Esophagus muscularis mucosa (tissue), 4 donors: ENCODE measurements at regions of chr7 and their contacts with region 1.

Region 1: DNA sequence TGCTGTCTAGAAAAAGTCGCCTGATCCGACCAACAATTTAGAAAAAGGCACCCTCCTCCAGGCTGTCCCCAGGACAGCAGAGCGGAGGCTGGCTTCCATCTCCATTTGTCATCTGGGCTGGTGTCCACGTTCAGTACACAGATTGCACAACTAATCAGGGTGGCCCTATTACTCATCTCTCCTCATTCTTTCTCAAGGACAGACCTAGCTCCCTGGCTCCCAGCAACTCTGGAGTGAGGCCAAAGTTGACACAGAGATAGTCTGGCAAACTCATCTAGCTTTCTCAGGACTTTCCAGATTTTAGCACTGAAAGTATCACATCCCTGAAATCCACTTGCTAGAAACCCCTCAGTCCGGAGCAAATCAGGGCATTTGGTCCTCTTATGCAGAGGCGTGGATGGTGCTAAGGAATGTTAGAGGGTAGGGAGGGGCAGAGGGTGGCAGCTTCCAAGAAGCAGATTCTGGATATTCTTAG is 75.1 kb downstream of the DNAH11 start:
- DNase-seq: no peak
- H3K4me3 ChIP-seq: no peak overlapping the region
- H3K27ac ChIP-seq: peak overlapping the region in 3 of 4 donors; percentile 42 to 69 (median 44)
- H3K4me1 ChIP-seq: peaks cover 0 to 23% (median 14%) of the 10 kb centered on the region in 4 donors
- H3K27me3 ChIP-seq: no peaks in the 10 kb centered on the region
- CTCF ChIP-seq: no peak
- EP300 ChIP-seq: no peak
- POLR2A ChIP-seq: no peak

Region 2: DNA sequence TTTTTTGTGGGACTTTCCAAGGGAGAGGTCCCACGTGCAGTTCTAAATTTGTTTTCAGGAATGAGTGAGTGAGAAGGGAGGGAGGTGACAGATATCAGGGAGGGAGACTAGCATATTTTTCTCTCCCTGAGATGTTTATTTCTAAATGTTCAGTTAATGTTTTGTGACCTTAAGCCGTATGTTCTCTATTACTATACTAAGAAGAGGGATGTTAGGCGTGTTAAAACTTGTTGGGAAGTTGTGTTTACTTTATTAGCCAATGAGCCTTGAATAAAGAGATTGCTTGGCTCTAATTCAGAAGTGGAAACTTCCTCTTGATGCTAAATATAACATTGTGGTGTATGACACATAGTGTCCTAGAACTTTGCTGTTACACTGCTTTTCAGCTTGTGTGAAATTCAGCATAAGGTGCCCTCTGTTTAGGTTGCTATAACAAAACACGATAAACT is 37.9 kb before region 1 on chr7:
- intact Hi-C with region 1: loop called (anchors 5 kb)
- DNase-seq: no peak
- H3K4me3 ChIP-seq: no peak overlapping the region
- H3K27ac ChIP-seq: peak overlapping the region; percentile 77 to 84 (median 80)
- H3K4me1 ChIP-seq: peaks cover 10 to 41% (median 31%) of the 10 kb centered on the region in 4 donors
- H3K27me3 ChIP-seq: no peaks in the 10 kb centered on the region
- CTCF ChIP-seq: no peak
- EP300 ChIP-seq: no peak
- POLR2A ChIP-seq: no peak